WTC11 (cell line): ENCODE measurements at regions of chr5 and their contacts with region 1.

Region 1: GRCh38 chr5:97534166-97534565 is 351.1 kb upstream of the RIOK2 start:
- DNase-seq: no peak
- ATAC-seq: peak; percentile 95
- H3K4me3 Mint-ChIP-seq: no peak overlapping the region
- H3K27ac Mint-ChIP-seq: no peak overlapping the region
- H3K4me1 Mint-ChIP-seq: peaks cover 8% of the 10 kb centered on the region
- H3K27me3 Mint-ChIP-seq: no peaks in the 10 kb centered on the region
- CTCF ChIP-seq: peak; percentile 49; the same call in 1 of the 2 replicates

Region 2: GRCh38 chr5:97231025-97231636 is 303.0 kb before region 1 on chr5:
- CTCF ChIA-PET with region 1: interaction called, 21 read pairs
- POLR2A ChIA-PET with region 1: no interaction called
- DNase-seq: peak; percentile 14
- ATAC-seq: peak; percentile 73
- H3K4me3 Mint-ChIP-seq: no peak overlapping the region
- H3K27ac Mint-ChIP-seq: no peak overlapping the region
- H3K4me1 Mint-ChIP-seq: no peaks in the 10 kb centered on the region
- H3K27me3 Mint-ChIP-seq: no peaks in the 10 kb centered on the region
- CTCF ChIP-seq: peak; percentile 37; the same call in 1 of the 2 replicates

Region 3: GRCh38 chr5:97297063-97297703 is 237.0 kb before region 1 on chr5:
- CTCF ChIA-PET with region 1: interaction called, 22 read pairs
- POLR2A ChIA-PET with region 1: interaction called, 3 read pairs
- DNase-seq: peak; percentile 69
- ATAC-seq: peak; percentile 100
- H3K4me3 Mint-ChIP-seq: no peak overlapping the region
- H3K27ac Mint-ChIP-seq: no peak overlapping the region
- H3K4me1 Mint-ChIP-seq: no peaks in the 10 kb centered on the region
- H3K27me3 Mint-ChIP-seq: no peaks in the 10 kb centered on the region
- CTCF ChIP-seq: peak; percentile 48; the same call in 1 of the 2 replicates

Region 4: GRCh38 chr5:97425511-97425910 is 108.7 kb before region 1 on chr5:
- CTCF ChIA-PET with region 1: interaction called, 10 read pairs
- POLR2A ChIA-PET with region 1: no interaction called
- DNase-seq: peak; percentile 55
- ATAC-seq: peak; percentile 72
- H3K4me3 Mint-ChIP-seq: no peak overlapping the region
- H3K27ac Mint-ChIP-seq: no peak overlapping the region
- H3K4me1 Mint-ChIP-seq: no peaks in the 10 kb centered on the region
- H3K27me3 Mint-ChIP-seq: no peaks in the 10 kb centered on the region
- CTCF ChIP-seq: 0 out of 2 replicates have a peak, but pooled peaks have one; percentile 17

Region 5: GRCh38 chr5:97550164-97550563 is 16.0 kb after region 1 on chr5:
- CTCF ChIA-PET with region 1: interaction called, 10 read pairs
- POLR2A ChIA-PET with region 1: no interaction called
- DNase-seq: no peak
- ATAC-seq: peak; percentile 71
- H3K4me3 Mint-ChIP-seq: no peak overlapping the region
- H3K27ac Mint-ChIP-seq: no peak overlapping the region
- H3K4me1 Mint-ChIP-seq: peaks cover 32% of the 10 kb centered on the region
- H3K27me3 Mint-ChIP-seq: no peaks in the 10 kb centered on the region
- CTCF ChIP-seq: no peak

Region 6: GRCh38 chr5:97601651-97602050 is 67.5 kb after region 1 on chr5:
- CTCF ChIA-PET with region 1: no interaction called
- POLR2A ChIA-PET with region 1: no interaction called
- DNase-seq: no peak
- ATAC-seq: no peak
- H3K4me3 Mint-ChIP-seq: no peak overlapping the region
- H3K27ac Mint-ChIP-seq: no peak overlapping the region
- H3K4me1 Mint-ChIP-seq: no peaks in the 10 kb centered on the region
- H3K27me3 Mint-ChIP-seq: no peaks in the 10 kb centered on the region
- CTCF ChIP-seq: no peak